Sigmoid colon (tissue), 7 donors: ENCODE measurements at regions of chr13 and their contacts with region 1.

Region 1: DNA sequence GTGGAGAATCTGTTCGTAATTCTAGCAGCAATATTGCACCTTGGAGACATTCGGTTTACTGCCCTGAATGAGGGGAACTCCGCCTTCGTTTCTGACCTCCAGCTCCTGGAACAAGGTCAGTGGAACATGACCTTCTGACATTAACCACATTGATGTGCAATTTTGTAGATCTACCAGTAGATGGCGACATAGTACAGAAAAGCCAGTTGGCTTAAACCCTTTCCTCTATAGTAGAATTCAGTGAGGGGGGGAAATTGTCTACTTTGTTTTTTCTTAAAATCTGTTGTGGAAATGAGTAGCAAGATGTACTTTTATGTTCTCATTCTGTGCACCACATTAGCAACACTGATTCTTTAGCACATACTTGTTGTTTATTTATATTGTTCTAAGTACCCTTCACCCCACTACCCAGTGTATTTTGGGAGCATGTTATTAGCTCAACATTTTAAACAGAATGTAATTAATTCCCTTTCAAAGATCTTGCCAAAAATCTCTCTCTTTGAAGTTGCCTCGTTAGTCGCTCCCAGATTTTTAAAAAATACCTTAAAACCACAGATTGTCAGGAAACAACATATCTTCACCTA is 332.2 kb downstream of the MYO16 start:
- DNase-seq: no peak
- H3K4me3 ChIP-seq: no peak overlapping the region
- H3K27ac ChIP-seq: no peak overlapping the region
- H3K4me1 ChIP-seq: peaks cover 0 to 6% (median 2%) of the 10 kb centered on the region in 4 donors
- H3K27me3 ChIP-seq: no peaks in the 10 kb centered on the region
- CTCF ChIP-seq: peak; percentile 66 to 83 (median 74)
- EP300 ChIP-seq: no peak
- POLR2A ChIP-seq: no peak

Region 2: DNA sequence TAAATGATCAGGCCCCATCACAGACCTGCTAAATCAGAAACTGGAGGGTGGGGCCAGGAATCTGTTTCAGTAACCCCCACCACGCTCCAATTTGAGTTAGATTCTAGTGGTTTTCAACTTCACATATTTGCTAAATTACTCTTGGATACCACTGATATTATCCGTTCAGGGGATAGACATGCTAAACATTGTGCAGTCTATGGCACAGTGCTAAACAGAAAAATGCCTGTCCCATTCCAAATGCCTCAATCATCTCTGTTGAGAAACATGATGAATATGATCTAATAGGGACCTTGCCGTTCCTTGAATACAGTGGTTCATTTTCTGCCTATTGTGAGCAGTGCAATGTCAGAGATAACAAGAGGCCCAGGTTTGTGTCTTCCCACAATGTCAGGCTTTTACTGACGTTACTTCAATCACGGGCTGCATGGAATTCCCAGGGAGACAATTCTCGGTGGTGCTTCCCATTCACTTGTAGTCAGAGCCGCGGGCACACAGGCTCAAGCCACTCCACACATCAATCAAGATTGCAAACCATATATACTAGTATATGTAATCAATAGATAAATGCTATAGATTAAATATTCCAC is 279.6 kb before region 1 on chr13:
- intact Hi-C with region 1: no loop called
- DNase-seq: no peak
- H3K4me3 ChIP-seq: no peak overlapping the region
- H3K27ac ChIP-seq: no peak overlapping the region
- H3K4me1 ChIP-seq: no peaks in the 10 kb centered on the region
- H3K27me3 ChIP-seq: no peaks in the 10 kb centered on the region
- CTCF ChIP-seq: no peak
- EP300 ChIP-seq: no peak
- POLR2A ChIP-seq: no peak

Region 3: DNA sequence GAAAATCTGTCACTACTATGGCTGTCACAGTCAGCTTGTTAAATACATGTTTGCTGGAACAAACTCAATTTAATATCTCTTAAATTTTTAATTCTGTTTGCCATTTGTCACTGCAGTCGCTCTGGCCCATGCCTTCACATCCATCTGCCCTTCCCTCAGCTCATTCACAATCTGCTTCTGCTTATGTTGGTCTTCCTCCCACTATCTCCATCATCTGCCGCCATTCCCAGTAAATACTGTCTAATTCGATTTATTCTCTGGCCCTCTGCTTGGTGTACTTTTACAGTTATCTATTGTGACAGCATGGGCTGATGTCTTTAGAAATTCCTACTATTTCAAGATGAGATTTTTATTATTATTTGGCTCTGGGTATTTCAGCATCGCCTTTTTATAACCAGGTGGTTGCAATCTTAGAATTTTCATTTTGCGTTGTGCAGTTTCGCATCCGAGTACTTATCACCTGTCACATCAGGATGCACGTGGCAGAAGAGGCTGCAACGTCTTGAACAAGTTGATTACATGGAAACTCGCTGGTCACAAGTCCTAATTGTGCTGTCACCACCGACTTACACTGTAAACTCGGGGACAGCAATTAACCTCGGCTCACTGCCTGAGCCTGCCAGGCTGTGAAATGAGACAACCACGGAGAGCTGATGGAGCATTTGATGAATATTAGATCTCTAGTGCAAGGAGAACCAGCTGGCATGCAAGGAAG is 173.8 kb before region 1 on chr13:
- intact Hi-C with region 1: no loop called
- DNase-seq: no peak
- H3K4me3 ChIP-seq: no peak overlapping the region
- H3K27ac ChIP-seq: no peak overlapping the region
- H3K4me1 ChIP-seq: peaks cover 0 to 6% (median 3%) of the 10 kb centered on the region in 4 donors
- H3K27me3 ChIP-seq: no peaks in the 10 kb centered on the region
- CTCF ChIP-seq: no peak
- EP300 ChIP-seq: no peak
- POLR2A ChIP-seq: no peak

Region 4: GRCh38 chr13:108915634-108916512 is 45.8 kb before region 1 on chr13:
- intact Hi-C with region 1: loop called (anchors 5 kb)
- DNase-seq: peak; percentile 98
- H3K4me3 ChIP-seq: peak overlapping the region in 3 of 4 donors; percentile 20 to 34 (median 25)
- H3K27ac ChIP-seq: peak overlapping the region; percentile 73 to 87 (median 80)
- H3K4me1 ChIP-seq: peaks cover 0 to 39% (median 25%) of the 10 kb centered on the region in 4 donors
- H3K27me3 ChIP-seq: no peaks in the 10 kb centered on the region
- CTCF ChIP-seq: no peak
- EP300 ChIP-seq: peak in 3 of 4 donors; percentile 77 to 98 (median 82)
- POLR2A ChIP-seq: no peak

Region 5: GRCh38 chr13:109145631-109146030 is 184.0 kb after region 1 on chr13:
- intact Hi-C with region 1: loop called (anchors 5 kb)
- DNase-seq: no peak
- H3K4me3 ChIP-seq: no peak overlapping the region
- H3K27ac ChIP-seq: peak overlapping the region in 2 of 4 donors; percentile 55 to 69
- H3K4me1 ChIP-seq: peaks cover 0 to 28% (median 24%) of the 10 kb centered on the region in 4 donors
- H3K27me3 ChIP-seq: peaks cover 2 to 8% (median 8%) of the 10 kb centered on the region in 3 donors
- CTCF ChIP-seq: peak; percentile 49 to 77 (median 67)
- EP300 ChIP-seq: no peak
- POLR2A ChIP-seq: no peak

Region 6: GRCh38 chr13:109156181-109156935 is 194.7 kb after region 1 on chr13:
- intact Hi-C with region 1: no loop called
- DNase-seq: no peak
- H3K4me3 ChIP-seq: peak overlapping the region in 2 of 4 donors; percentile 10 to 14
- H3K27ac ChIP-seq: peak overlapping the region; percentile 57 to 88 (median 79)
- H3K4me1 ChIP-seq: peaks cover 0 to 30% (median 27%) of the 10 kb centered on the region in 4 donors
- H3K27me3 ChIP-seq: no peaks in the 10 kb centered on the region
- CTCF ChIP-seq: no peak
- EP300 ChIP-seq: peak in 1 of 4 donors; percentile 14
- POLR2A ChIP-seq: no peak

Region 7: DNA sequence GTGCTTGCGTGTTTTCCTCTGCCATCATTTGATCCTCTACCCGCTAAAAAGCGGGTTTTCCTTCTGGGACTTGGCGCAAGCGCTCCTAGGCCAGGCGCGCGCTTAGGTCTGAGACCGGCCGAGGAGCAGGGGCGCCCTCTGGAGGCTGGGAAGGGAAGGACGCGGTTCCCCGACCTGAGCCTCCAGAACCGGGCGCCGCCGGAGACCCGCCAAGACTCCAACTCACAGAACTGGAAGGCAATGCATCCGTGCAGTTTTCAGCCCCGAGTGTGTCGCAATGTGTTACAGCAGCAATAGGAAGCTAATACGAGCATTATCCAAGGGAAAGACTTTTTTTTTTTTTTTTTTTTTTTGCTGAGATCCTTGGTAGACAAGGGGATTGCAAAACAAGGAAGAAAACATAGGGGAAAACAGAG is 1154.4 kb after region 1 on chr13:
- intact Hi-C with region 1: loop called (anchors 2 kb)
- DNase-seq: peak; percentile 79
- H3K4me3 ChIP-seq: no peak overlapping the region
- H3K27ac ChIP-seq: no peak overlapping the region
- H3K4me1 ChIP-seq: peaks cover 0 to 10% (median 8%) of the 10 kb centered on the region in 4 donors
- H3K27me3 ChIP-seq: peaks cover 0 to 2% (median 0%) of the 10 kb centered on the region in 3 donors
- CTCF ChIP-seq: peak; percentile 46 to 79 (median 66)
- EP300 ChIP-seq: no peak
- POLR2A ChIP-seq: no peak

Region 8: DNA sequence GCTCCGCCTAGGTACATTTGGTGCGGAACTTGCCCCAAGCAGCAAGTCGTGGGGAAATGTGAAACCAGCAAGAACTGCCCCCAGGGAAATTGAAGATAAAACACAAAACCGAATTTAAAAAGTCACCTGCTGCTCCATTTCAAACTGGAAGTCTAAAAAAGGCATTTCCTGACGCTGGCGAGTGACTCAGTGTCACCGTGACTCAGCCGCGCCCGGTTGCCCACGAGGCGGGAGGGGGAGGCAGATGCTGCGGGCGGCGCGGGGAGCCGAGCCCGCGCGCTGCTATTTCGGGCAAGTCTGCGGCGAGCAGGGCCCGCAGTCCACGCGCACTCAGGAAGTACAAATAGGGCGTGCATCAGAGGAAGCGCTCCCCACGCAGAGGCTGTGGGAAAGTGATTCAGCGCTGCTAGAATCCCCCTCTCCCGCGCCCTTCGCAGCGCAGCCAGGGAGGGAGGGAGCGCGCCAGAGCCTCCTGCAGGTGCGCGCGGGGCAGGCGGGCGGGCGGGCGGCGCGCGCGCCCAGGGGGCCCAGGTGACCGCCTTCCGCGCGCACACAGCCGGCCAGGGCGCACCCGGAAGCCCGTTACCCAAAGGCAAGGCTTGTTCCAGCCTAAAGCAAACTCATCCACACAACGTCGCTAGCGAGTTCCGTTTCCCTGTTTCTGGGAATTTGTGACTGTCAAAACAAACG is 1176.5 kb after region 1 on chr13:
- intact Hi-C with region 1: loop called (anchors 5 kb)
- DNase-seq: peak; percentile 86
- H3K4me3 ChIP-seq: peak overlapping the region; percentile 39 to 59 (median 58)
- H3K27ac ChIP-seq: peak overlapping the region; percentile 42 to 76 (median 58)
- H3K4me1 ChIP-seq: peaks cover 0 to 20% (median 16%) of the 10 kb centered on the region in 4 donors
- H3K27me3 ChIP-seq: no peaks in the 10 kb centered on the region
- CTCF ChIP-seq: no peak
- EP300 ChIP-seq: peak in 2 of 4 donors; percentile 42 to 89
- POLR2A ChIP-seq: no peak